Heart right ventricle (tissue), 16 donors: ENCODE measurements at regions of chr22 and their contacts with region 1.

Region 1: GRCh38 chr22:23402275-23403151 is 177.6 kb downstream of the IGLL1 start:
- DNase-seq: peak; percentile 26 to 44
- ATAC-seq: peak; percentile 11 to 68 (median 49)
- H3K4me3 ChIP-seq: peak overlapping the region in 9 of 10 donors; percentile 7 to 50 (median 30)
- H3K27ac ChIP-seq: no peak overlapping the region
- H3K4me1 ChIP-seq: peaks cover 0 to 6% (median 0%) of the 10 kb centered on the region in 9 donors
- H3K27me3 ChIP-seq: peaks cover 0 to 36% (median 18%) of the 10 kb centered on the region in 7 donors
- CTCF ChIP-seq: peak in 8 of 9 donors; percentile 21 to 61 (median 40)

Region 2: GRCh38 chr22:23315341-23315917 is 87.1 kb before region 1 on chr22:
- intact Hi-C with region 1: no loop called
- DNase-seq: peak; percentile 43 to 77
- ATAC-seq: peak in 2 of 8 donors; percentile 17 to 75
- H3K4me3 ChIP-seq: no peak overlapping the region
- H3K27ac ChIP-seq: peak overlapping the region in 2 of 10 donors; percentile 26 to 41
- H3K4me1 ChIP-seq: peaks cover 0 to 8% (median 0%) of the 10 kb centered on the region in 9 donors
- H3K27me3 ChIP-seq: no peaks in the 10 kb centered on the region
- CTCF ChIP-seq: peak; percentile 58 to 81 (median 66)

Region 3: GRCh38 chr22:23533328-23533762 is 130.8 kb after region 1 on chr22:
- intact Hi-C with region 1: loop called in 4 of 10 experiments (anchors 5 to 10 kb)
- DNase-seq: no peak
- ATAC-seq: no peak
- H3K4me3 ChIP-seq: no peak overlapping the region
- H3K27ac ChIP-seq: no peak overlapping the region
- H3K4me1 ChIP-seq: peaks cover 0 to 11% (median 0%) of the 10 kb centered on the region in 9 donors
- H3K27me3 ChIP-seq: peaks cover 0 to 7% (median 0%) of the 10 kb centered on the region in 7 donors
- CTCF ChIP-seq: peak in 6 of 9 donors; percentile 16 to 33 (median 24)